ENCODE measurements at regions of chr11 and their contacts with region 1.

Region 1: DNA sequence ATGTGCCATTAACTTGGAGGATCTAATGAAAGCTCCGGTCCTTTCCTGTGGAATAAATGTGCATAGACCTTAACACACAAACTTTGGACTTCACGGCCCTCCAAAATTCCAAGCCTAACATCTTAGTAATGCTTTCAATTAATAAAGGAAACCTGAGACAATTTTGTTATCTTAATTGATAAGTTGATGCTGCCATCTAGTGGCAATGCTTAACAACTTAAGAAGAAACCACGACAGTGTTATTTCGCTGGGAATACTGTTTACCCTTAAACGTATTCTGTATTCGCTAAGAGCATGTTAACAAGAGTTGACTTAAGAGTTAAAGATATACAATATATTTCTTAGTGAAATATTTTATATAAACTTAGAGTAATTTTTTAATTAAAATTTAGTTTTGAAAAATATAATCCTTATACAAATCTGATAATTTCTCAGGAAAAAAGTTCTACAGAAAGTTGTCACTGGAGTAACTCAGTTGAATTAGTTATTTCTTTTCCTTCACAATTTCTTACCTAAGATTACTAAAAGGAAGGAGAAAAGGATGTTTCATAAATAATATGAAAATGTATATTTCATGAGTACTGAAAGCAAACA is 35.0 kb upstream of the OR9G4 start:
- DNase-seq: no peak
- H3K4me3 ChIP-seq: no peak overlapping the region
- H3K27ac ChIP-seq: no peak overlapping the region
- H3K4me1 ChIP-seq: no peaks in the 10 kb centered on the region
- H3K27me3 ChIP-seq: no peaks in the 10 kb centered on the region
- CTCF ChIP-seq: peak; percentile 37 to 61 (median 56)
- EP300 ChIP-seq: no peak
- POLR2A ChIP-seq: no peak

Region 2: DNA sequence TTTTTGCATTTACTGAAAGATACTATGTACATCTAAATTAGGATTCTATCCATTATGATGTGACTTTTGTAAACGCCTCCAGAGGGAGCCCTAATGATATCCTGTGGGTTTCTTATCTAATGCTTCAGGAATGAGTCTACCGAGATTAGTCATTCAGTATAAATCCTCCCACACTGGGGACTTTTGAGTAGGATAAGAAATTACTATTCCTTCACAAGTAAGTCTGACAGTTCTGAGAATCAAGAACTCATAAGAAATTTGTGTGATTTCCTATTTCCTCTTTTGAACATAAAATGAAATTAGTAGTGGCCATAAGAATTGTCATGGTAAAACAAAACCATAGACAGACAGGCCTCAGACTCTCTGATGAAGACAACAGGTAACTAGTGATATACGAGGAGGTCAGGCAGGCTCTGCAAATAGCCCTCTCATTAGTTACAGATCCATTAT is 158.9 kb before region 1 on chr11:
- intact Hi-C with region 1: loop called (anchors 5 kb)
- DNase-seq: no peak
- H3K4me3 ChIP-seq: no peak overlapping the region
- H3K27ac ChIP-seq: no peak overlapping the region
- H3K4me1 ChIP-seq: no peaks in the 10 kb centered on the region
- H3K27me3 ChIP-seq: no peaks in the 10 kb centered on the region
- CTCF ChIP-seq: peak in 1 of 3 experiments; percentile 40
- EP300 ChIP-seq: no peak
- POLR2A ChIP-seq: no peak